ENCODE measurements at regions of chr3 and their contacts with region 1.

Region 1: DNA sequence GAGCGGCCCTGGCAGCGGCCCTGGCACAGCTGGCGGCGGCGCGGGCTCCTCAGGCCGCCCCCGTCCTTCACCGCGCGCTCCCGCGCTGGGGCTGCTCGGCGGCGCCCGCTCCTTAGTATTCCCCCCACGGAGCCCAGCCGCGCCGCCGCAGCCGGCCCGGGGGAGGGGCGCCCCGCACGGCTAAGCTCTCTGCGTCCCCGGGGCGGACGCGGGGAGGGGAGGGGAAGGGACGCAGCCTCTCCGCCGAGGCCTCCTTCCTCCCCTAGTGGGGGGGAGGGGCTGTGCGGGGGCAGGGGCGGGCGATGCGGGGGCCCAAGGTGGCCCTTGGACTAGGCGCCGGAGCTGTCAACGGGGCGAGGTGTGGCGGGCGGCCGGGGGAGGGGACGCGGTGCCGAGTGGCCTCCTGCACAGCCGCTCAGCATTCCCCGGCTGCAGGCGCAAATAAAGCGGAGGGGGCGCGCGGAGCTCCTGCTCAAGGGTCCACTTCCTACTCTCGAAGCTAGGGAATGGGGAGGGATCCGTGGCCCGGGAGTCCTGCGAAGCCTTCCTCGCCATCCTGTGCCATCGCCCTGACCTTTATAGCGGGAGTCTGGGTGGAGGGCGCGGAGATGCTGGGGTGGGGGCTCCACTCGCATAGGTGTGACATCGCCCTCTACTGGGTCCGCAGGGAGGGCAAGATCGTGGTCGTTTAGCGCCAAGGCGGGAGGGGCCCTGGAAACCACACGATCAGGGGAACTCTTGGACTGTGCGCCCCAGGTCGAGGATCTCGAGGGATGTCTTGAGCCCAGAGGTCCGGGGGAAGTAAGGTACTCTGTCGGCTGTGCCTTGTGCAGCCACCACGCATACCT is 22.2 kb downstream of the EPHB3 start:
- DNase-seq: peak; percentile 41 to 85 (median 80)
- ATAC-seq: peak; percentile 71 to 72
- H3K4me3 ChIP-seq: peak overlapping the region; percentile 41
- H3K27ac ChIP-seq: no peak overlapping the region
- H3K4me1 ChIP-seq: no peaks in the 10 kb centered on the region
- H3K27me3 ChIP-seq: no peaks in the 10 kb centered on the region

Region 2: DNA sequence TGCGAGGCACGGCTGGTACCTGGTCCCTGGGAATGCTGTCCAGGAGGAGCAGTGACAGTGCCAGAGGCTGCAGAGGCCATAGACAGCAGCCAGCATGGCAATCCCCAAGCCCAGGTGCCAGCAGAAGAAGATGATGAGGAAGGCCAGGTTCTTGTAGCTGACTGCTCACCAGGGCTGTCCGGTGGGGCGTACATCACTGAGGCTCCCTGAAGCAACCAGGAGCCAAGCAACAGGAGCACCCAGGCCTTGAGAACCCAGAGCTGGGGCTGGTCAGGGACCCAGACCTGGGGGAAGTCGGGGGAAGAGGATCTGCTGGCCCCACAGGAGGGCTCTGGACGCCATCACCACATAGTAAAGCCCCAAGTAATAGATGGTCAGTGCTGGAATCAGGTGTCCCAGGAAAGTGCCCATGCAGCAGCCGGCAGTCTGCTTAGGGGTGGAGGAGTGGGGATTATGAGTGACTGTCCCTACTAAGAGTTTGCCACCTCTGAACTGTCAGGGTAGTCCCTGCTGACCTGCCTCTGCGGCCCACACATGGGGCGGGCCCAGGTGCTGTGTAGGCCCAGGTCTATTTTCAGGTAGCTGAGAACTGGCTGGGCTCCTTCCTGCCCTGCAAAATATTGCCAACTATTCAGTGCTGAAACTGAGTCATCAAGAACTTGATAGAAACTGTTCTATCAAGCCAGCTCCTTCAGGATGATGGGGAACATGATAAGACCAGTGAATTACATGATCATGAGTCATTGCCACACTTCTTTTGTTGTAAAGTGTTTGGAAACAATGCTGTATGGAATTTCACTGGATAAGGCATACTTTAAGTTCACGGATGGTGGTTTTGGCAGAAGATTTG is 135.3 kb before region 1 on chr3:
- intact Hi-C with region 1: no loop called
- DNase-seq: no peak
- ATAC-seq: peak in 1 of 2 donors; percentile 57
- H3K4me3 ChIP-seq: no peak overlapping the region
- H3K27ac ChIP-seq: no peak overlapping the region
- H3K4me1 ChIP-seq: no peaks in the 10 kb centered on the region
- H3K27me3 ChIP-seq: no peaks in the 10 kb centered on the region

Region 3: GRCh38 chr3:184531626-184532280 is 52.0 kb before region 1 on chr3:
- intact Hi-C with region 1: no loop called
- DNase-seq: no peak
- ATAC-seq: peak in 1 of 2 donors; percentile 61
- H3K4me3 ChIP-seq: no peak overlapping the region
- H3K27ac ChIP-seq: no peak overlapping the region
- H3K4me1 ChIP-seq: no peaks in the 10 kb centered on the region
- H3K27me3 ChIP-seq: no peaks in the 10 kb centered on the region

Region 4: GRCh38 chr3:184711493-184712247 is 127.9 kb after region 1 on chr3 and contains the start of gene MAGEF1:
- intact Hi-C with region 1: loop called in 1 of 4 experiments (anchors 10 kb)
- DNase-seq: peak; percentile 89 to 94 (median 94)
- ATAC-seq: peak; percentile 96 to 97
- H3K4me3 ChIP-seq: peak within 1 kb of the TSS; percentile 73
- H3K27ac ChIP-seq: peak within 1 kb of the TSS; percentile 79
- H3K4me1 ChIP-seq: peaks cover 6% of the 10 kb centered on the region
- H3K27me3 ChIP-seq: no peaks in the 10 kb centered on the region
- total RNA-seq, gene MAGEF1: 25.5 to 29.8 (median 27.3) TPM

Measured in right cardiac atrium (tissue), 5 donors.